Esophagus squamous epithelium (tissue), 5 donors: ENCODE measurements at regions of chrX and their contacts with region 1.

Region 1: GRCh38 chrX:130060122-130061069 is 49.9 kb downstream of the ELF4 start:
- DNase-seq: peak; percentile 3
- H3K4me3 ChIP-seq: peak overlapping the region; percentile 43 to 72 (median 55)
- H3K27ac ChIP-seq: peak overlapping the region; percentile 70 to 77 (median 76)
- H3K4me1 ChIP-seq: peaks cover 3 to 12% (median 5%) of the 10 kb centered on the region in 3 donors
- H3K27me3 ChIP-seq: no peaks in the 10 kb centered on the region
- CTCF ChIP-seq: peak; percentile 75 to 93 (median 91)
- POLR2A ChIP-seq: peak in 1 of 4 donors; percentile 4

Region 2: GRCh38 chrX:129606918-129607317 is 453.5 kb before region 1 on chrX:
- intact Hi-C with region 1: loop called (anchors 10 kb)
- DNase-seq: no peak
- H3K4me3 ChIP-seq: no peak overlapping the region
- H3K27ac ChIP-seq: no peak overlapping the region
- H3K4me1 ChIP-seq: peaks cover 0 to 20% (median 3%) of the 10 kb centered on the region in 3 donors
- H3K27me3 ChIP-seq: peaks cover 0 to 3% (median 0%) of the 10 kb centered on the region in 4 donors
- CTCF ChIP-seq: peak; percentile 68 to 85 (median 80)
- POLR2A ChIP-seq: no peak

Region 3: GRCh38 chrX:130125091-130125874 is 64.9 kb after region 1 on chrX:
- intact Hi-C with region 1: no loop called
- DNase-seq: no peak
- H3K4me3 ChIP-seq: no peak overlapping the region
- H3K27ac ChIP-seq: peak overlapping the region; percentile 56 to 72 (median 66)
- H3K4me1 ChIP-seq: peaks cover 0 to 41% (median 6%) of the 10 kb centered on the region in 3 donors
- H3K27me3 ChIP-seq: no peaks in the 10 kb centered on the region
- CTCF ChIP-seq: no peak
- POLR2A ChIP-seq: no peak